ENCODE measurements at regions of chr1 and their contacts with region 1.

Region 1: GRCh38 chr1:157969697-157970485 is 23.6 kb upstream of the KIRREL1 start:
- DNase-seq: peak; percentile 79
- H3K4me3 Mint-ChIP-seq: no peak overlapping the region
- H3K27ac Mint-ChIP-seq: peak overlapping the region; percentile 64
- H3K4me1 Mint-ChIP-seq: peaks cover 49% of the 10 kb centered on the region
- H3K27me3 Mint-ChIP-seq: no peaks in the 10 kb centered on the region
- CTCF ChIP-seq: peak; percentile 68

Region 2: GRCh38 chr1:158035976-158036583 is 66.2 kb after region 1 on chr1:
- CTCF ChIA-PET with region 1: interaction called, 4 read pairs
- intact Hi-C with region 1: loop called (anchors 2 kb)
- DNase-seq: peak; percentile 60
- H3K4me3 Mint-ChIP-seq: no peak overlapping the region
- H3K27ac Mint-ChIP-seq: no peak overlapping the region
- H3K4me1 Mint-ChIP-seq: peaks cover 13% of the 10 kb centered on the region
- H3K27me3 Mint-ChIP-seq: no peaks in the 10 kb centered on the region
- CTCF ChIP-seq: peak; percentile 77

Region 3: DNA sequence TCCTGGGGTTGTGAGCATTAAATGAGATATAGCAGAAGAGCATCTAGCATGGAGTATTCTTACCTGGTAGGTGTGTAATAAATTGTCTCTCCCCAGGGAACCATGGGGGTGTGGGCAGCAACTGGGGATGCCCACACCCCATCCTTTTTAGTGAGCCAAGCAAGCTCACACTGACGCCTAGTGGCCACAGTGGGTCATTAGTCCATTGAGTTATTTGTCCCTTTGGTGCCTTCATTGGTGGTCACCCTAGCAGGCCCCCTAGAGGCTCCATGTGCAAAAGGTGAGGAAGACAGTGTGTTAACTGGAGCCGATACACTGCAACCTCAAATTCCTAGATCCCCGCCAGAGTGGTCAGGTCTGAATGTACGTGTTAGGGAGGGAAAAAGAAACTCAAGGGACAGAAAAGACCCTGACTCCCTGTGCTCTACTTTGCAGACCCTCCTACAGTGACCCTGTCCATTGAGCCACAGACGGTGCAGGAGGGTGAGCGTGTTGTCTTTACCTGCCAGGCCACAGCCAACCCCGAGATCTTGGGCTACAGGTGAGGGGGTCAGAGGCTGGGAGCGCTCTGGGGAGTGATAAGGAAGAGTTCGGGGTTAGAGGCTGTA is 117.5 kb after region 1 on chr1:
- CTCF ChIA-PET with region 1: interaction called, 8 read pairs
- intact Hi-C with region 1: loop called (anchors 1 kb)
- DNase-seq: peak; percentile 79
- H3K4me3 Mint-ChIP-seq: no peak overlapping the region
- H3K27ac Mint-ChIP-seq: no peak overlapping the region
- H3K4me1 Mint-ChIP-seq: no peaks in the 10 kb centered on the region
- H3K27me3 Mint-ChIP-seq: no peaks in the 10 kb centered on the region
- CTCF ChIP-seq: peak; percentile 98

Region 4: DNA sequence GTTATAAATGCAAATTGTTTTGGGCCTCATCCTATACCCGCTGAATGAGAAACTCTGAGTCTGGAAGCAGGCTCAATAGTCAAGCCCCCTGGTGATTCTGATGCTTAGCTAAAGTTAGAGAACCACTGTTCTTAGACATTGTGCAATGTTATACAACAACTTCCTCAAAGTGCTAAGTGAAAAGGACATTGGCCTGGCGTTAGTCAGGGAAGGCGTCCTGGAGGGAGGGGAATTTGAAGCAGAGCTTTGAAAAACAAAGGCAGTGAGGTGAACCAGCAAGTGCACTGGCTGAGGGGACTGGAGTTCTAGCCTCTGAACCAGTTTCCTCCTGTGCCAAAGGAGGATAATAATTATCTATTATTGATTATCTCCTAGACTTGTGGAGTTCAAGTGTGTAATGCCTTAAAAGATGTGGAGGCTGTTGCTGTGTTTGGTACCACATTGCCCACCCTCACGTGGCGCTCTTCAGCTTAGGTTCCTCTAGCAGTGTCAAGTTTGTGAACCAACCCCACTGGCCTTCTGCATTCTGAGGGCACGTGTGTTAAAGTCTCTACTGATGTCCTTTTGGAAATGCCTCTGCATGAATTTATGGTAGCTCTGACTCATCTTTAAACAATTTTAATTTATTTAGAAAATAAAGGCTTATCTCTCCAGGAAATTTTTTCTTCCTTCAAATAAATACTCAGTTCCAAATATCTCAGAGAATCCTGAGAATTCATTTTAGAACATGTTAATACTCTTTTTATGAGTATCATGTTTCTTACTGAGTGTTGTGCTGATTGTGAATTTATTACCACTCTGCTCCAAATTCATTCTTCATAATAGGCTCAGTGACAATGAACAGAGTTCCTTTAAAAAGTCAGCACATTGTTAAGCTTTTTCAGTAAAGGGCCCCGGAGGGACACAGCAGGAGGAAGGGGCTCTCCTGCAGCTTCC is 216.1 kb after region 1 on chr1:
- CTCF ChIA-PET with region 1: no interaction called
- intact Hi-C with region 1: loop called (anchors 5 kb)
- DNase-seq: peak; percentile 73
- H3K4me3 Mint-ChIP-seq: no peak overlapping the region
- H3K27ac Mint-ChIP-seq: peak overlapping the region; percentile 11
- H3K4me1 Mint-ChIP-seq: peaks cover 26% of the 10 kb centered on the region
- H3K27me3 Mint-ChIP-seq: peaks cover 14% of the 10 kb centered on the region
- CTCF ChIP-seq: no peak

Region 5: DNA sequence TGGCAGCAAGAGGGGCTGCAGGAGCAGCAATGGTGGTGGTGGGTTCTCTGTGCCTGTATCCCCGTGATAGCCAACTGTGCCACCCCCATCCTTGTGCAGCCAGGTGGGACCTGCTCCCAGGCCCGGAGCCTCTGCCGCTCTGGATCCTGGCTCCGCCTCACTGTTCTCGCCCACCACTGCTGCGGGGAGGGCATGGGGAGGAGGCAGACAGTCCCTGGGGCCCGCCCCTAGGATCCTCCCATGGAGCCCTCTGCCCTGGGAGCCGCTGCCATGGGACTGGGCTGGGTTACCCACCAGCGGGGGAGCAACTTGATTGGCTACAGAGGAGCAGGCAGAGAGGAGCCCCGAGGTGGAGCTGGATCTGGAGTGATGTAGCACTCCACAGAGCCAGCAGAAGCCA is 242.4 kb after region 1 on chr1:
- CTCF ChIA-PET with region 1: no interaction called
- intact Hi-C with region 1: no loop called
- DNase-seq: no peak
- H3K4me3 Mint-ChIP-seq: no peak overlapping the region
- H3K27ac Mint-ChIP-seq: no peak overlapping the region
- H3K4me1 Mint-ChIP-seq: no peaks in the 10 kb centered on the region
- H3K27me3 Mint-ChIP-seq: peaks cover 23% of the 10 kb centered on the region
- CTCF ChIP-seq: no peak

Measured in Calu3 (cell line).